A549 (cell line): ENCODE measurements at regions of chr10 and their contacts with region 1.

Region 1: DNA sequence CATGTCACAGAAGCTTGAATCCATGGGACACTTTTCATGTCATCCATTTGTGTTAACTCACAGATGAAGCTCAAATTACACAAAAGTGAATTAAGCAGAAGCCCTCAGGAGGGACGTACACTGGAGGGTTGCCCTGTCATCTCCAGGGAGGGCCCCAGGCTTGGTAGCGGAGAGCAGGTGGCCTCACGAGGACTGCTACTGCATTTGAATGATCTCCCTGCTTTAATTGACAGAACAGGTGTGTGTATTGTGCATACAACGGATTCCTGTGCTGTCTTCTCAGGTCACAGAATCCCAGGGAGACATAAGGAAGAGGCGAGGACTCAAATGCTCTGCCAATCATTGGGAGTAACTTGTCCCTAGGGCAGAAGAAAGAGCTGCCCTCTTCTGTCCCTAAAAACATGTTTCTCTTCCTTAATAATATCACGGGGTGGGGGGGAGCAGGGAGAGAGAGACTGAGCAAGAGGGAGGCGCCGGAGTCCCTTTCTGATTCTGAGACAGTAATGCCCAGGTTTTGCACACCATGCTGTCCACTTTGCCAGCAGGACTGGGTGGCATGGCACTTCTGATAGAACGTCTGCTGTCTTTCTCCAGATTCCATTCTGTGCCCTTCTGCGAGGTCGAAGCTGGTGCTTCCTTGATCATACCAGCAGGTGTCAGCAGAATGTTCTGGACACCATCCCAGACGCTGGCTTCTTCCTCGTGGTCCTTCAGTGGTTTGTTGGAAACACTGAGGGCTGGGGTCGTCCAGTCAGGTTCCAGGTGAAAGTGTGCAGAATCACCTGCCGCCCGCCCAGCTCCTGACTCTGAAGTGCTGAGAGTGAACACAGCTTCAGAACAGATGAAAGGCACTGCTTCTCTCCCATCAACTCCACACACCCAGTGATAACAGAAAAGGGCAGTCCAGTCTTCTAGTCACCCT is 26.2 kb upstream of the RASGEF1A start:
- DNase-seq: peak; percentile 64 to 68
- ATAC-seq: peak; percentile 91 to 95
- H3K4me3 ChIP-seq: no peak overlapping the region
- H3K27ac ChIP-seq: peak overlapping the region; percentile 66 to 72
- H3K4me1 ChIP-seq: peaks cover 13% of the 10 kb centered on the region
- CTCF ChIP-seq: peak; percentile 86
- EP300 ChIP-seq: no peak
- POLR2A ChIP-seq: no peak
- RAD21 ChIP-seq: peak; percentile 89 to 92

Region 2: DNA sequence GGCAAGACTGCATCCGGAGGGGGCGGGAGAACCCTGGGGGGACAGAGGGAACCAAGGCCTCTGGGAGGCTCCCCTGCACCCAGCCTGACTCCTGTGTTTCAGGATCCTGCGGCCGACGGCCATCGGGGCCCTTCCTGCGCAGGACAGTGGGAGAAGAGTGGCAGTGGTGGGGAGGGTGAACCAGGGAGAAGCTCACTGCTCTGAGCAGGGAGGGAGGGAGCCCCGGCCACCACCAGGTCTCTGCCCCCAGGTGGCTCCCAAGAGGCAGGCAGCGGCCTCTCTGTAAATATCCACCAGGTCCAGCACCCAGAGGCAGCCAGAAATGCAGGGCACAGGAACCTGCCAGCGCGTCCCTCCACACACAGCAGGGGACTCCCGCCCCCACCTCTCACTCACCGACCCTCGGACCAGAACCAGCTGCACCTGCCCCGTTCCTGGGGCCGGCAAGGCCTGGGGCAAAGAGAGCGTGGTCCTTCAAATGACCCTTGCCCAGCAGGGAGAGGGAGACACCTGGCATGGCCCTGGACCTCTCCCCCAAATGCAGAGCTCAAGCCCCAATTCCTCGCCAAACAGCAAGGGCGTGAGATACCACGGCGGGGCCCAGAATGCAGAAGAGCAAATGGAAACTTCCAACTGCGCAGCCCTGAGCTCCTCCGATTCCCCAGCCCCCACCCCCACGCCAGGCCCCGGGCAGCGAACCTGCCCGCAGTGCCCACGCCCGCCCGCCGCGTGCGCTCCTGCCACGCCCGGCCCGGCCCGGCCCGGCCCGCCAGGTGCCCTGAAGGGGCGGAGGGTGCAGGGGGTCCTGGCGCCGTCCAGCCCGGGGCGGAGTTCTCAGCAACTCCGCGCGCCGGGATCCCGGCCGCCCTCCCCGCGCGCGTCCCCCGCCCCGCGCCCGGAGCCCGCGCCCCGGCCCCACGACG is 27.0 kb before region 1 on chr10:
- CTCF ChIA-PET with region 1: interaction called, 13 read pairs
- POLR2A ChIA-PET with region 1: no interaction called
- DNase-seq: peak; percentile 77 to 96
- ATAC-seq: peak; percentile 88 to 94
- H3K4me3 ChIP-seq: peak overlapping the region; percentile 67
- H3K27ac ChIP-seq: peak overlapping the region; percentile 75 to 85
- H3K4me1 ChIP-seq: peaks cover 13% of the 10 kb centered on the region; the same call in 1 of the 3 replicates
- CTCF ChIP-seq: peak; percentile 53
- EP300 ChIP-seq: no peak
- POLR2A ChIP-seq: no peak
- RAD21 ChIP-seq: peak; percentile 69 to 72

Region 3: DNA sequence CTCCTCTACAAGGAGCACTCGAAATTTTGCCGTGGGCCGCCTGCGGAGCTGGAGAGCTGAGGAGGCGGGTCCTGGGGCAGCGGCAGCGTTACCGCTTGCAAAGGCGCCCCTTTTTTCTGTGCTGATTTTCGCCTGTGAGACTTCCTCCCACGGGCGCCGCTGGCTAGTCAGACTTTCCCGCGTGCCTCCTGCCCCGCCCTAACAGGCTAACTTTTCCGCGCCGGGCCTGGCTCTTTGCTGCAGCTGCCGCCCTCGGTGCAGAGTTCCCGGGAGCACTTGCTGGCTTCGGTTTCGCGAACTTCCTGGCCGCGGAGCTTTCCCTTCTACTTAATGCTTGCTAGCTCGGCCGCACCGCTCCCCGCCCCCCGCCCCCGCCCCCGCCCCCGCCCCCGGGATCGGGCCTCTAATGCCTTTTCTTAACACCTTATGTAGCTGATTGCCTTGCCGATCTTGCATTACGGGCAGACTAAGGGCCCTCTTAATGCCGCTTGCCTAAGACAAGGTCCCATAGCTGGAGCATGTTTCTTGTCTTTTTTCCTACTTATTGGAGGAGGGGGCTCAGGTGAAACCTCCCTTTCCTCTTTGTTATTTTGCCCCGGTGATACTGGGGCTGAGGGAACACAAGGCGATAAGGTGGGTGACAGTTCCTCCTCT is 11.8 kb after region 1 on chr10:
- CTCF ChIA-PET with region 1: interaction called, 58 read pairs
- POLR2A ChIA-PET with region 1: interaction called, 5 read pairs
- DNase-seq: peak; percentile 43 to 46
- ATAC-seq: peak; percentile 80
- H3K4me3 ChIP-seq: peak overlapping the region; percentile 39
- H3K27ac ChIP-seq: peak overlapping the region; percentile 63 to 86
- H3K4me1 ChIP-seq: peaks cover 19% of the 10 kb centered on the region
- CTCF ChIP-seq: no peak
- EP300 ChIP-seq: no peak
- POLR2A ChIP-seq: no peak
- RAD21 ChIP-seq: no peak

Region 4: GRCh38 chr10:43322769-43323168 is 29.8 kb after region 1 on chr10:
- CTCF ChIA-PET with region 1: interaction called, 18 read pairs
- POLR2A ChIA-PET with region 1: no interaction called
- DNase-seq: peak; percentile 69 to 83
- ATAC-seq: peak; percentile 84 to 95
- H3K4me3 ChIP-seq: peak overlapping the region; percentile 42
- H3K27ac ChIP-seq: peak overlapping the region; percentile 60 to 79; a peak in 5 of 6 replicates
- H3K4me1 ChIP-seq: peaks cover 10% of the 10 kb centered on the region; the same call in 2 of the 3 replicates
- CTCF ChIP-seq: no peak
- EP300 ChIP-seq: no peak
- POLR2A ChIP-seq: peak; percentile 31; the same call in 1 of the 2 replicates
- RAD21 ChIP-seq: no peak

Region 5: DNA sequence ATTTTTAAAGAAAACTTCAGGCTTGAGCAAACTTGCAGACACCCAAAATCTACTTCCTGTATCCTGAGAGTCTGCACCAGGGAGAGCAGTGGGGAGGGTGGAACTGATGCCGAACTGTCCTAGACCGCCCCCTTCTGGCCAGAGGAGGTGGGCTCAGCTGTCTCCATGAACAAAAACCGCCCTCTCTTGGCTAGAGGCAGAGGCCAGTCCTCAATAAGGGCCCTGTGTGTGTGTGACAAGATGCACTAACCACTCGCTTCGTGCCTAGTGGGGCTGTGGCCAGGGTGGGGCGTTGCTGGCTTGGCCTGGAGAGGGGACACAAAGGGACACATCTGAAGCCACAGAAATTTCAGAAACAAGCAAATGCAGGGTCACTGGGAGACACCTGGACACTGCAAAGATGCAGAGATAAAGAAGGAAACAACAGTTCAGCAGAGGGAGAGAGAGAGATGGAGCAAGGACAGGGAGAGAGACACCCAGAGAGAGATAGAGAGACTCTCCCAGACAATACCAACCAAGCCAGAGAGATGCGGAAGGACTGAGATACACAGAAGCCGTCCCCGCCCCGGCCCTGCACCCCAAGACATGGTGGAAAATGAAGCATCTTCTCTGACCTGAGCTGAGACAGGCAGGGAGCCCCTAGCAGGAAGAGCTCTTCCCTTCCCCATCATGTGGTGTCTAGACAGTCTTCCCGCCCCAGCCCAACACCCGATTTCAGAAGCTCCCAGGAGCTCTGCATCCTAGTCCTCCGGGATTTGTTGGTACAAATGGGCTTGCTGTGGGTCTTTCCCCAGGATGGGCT is 55.7 kb after region 1 on chr10:
- CTCF ChIA-PET with region 1: interaction called, 234 read pairs
- POLR2A ChIA-PET with region 1: no interaction called
- DNase-seq: peak; percentile 87 to 92
- ATAC-seq: peak; percentile 99
- H3K4me3 ChIP-seq: no peak overlapping the region
- H3K27ac ChIP-seq: peak overlapping the region; percentile 56 to 71
- H3K4me1 ChIP-seq: peaks cover 30% of the 10 kb centered on the region
- CTCF ChIP-seq: peak; percentile 97
- EP300 ChIP-seq: no peak
- POLR2A ChIP-seq: no peak
- RAD21 ChIP-seq: peak; percentile 98 to 99

Region 6: GRCh38 chr10:43461950-43462349 is 168.9 kb after region 1 on chr10:
- CTCF ChIA-PET with region 1: interaction called, 24 read pairs
- POLR2A ChIA-PET with region 1: no interaction called
- DNase-seq: peak; percentile 55 to 86
- ATAC-seq: peak; percentile 89 to 91
- H3K4me3 ChIP-seq: no peak overlapping the region
- H3K27ac ChIP-seq: no peak overlapping the region
- H3K4me1 ChIP-seq: peaks cover 5% of the 10 kb centered on the region; the same call in 1 of the 3 replicates
- CTCF ChIP-seq: peak; percentile 89
- EP300 ChIP-seq: no peak
- POLR2A ChIP-seq: no peak
- RAD21 ChIP-seq: peak; percentile 80 to 81